Uterus (tissue), 4 donors: ENCODE measurements at regions of chr2 and their contacts with region 1.

Region 1: DNA sequence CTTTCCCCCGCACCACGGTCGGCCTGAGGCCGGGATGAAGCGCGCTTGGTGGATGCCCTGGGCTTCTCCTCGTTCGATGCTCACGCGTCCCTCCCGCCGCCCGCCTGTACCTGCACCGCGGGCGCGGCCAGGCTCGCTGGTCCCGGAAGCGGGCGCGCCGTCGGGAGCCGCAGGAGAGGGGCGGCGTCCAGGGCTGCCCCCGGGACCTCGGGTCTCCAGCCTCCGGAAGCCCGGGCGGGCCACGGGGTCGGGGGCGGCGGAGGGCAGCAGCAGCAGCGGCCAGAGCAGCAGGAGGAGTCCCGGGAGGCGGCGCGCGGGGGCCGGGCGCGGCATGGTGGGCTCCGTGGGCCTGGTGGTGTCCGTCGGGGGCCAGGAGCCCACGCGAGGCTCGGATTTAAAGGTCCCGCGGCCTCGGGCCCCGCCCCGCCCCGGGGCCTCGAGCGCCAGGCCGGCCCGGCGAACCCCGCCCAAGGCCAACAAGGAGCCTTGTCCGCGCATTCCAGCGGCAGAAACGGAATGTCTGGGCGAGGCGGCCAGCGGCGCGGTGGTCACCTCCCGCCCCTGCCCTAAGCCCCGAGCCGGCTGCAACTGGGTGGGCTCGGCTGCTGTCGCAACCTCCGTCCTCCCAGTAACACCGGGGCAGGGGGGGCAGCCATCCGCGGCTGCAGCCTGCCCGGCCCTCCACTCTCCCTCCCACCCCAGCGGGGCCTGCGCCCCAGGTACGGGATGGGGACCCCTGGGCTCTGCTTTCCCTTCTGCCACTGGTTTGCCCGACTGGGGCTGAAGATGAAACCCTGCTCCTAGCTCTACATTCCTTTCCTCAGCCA is at the start of gene MATN3:
- DNase-seq: peak; percentile 18 to 27
- H3K4me3 ChIP-seq: peak within 1 kb of the TSS; percentile 43 to 44
- H3K27ac ChIP-seq: peak within 1 kb of the TSS; percentile 58 to 60
- H3K4me1 ChIP-seq: peaks cover 0 to 7% of the 10 kb centered on the region in 2 donors
- H3K27me3 ChIP-seq: no peaks in the 10 kb centered on the region
- CTCF ChIP-seq: no peak
- POLR2A ChIP-seq: no peak
- total RNA-seq, gene MATN3: 1.2 to 2.1 (median 1.3) TPM

Region 2: GRCh38 chr2:20097879-20098714 is 85.6 kb after region 1 on chr2:
- intact Hi-C with region 1: loop called (anchors 5 kb)
- DNase-seq: peak; percentile 76 to 82
- H3K4me3 ChIP-seq: no peak overlapping the region
- H3K27ac ChIP-seq: no peak overlapping the region
- H3K4me1 ChIP-seq: no peaks in the 10 kb centered on the region
- H3K27me3 ChIP-seq: no peaks in the 10 kb centered on the region
- CTCF ChIP-seq: peak; percentile 78 to 95 (median 92)
- POLR2A ChIP-seq: no peak